ENCODE measurements at regions of chr22 and their contacts with region 1.

Region 1: DNA sequence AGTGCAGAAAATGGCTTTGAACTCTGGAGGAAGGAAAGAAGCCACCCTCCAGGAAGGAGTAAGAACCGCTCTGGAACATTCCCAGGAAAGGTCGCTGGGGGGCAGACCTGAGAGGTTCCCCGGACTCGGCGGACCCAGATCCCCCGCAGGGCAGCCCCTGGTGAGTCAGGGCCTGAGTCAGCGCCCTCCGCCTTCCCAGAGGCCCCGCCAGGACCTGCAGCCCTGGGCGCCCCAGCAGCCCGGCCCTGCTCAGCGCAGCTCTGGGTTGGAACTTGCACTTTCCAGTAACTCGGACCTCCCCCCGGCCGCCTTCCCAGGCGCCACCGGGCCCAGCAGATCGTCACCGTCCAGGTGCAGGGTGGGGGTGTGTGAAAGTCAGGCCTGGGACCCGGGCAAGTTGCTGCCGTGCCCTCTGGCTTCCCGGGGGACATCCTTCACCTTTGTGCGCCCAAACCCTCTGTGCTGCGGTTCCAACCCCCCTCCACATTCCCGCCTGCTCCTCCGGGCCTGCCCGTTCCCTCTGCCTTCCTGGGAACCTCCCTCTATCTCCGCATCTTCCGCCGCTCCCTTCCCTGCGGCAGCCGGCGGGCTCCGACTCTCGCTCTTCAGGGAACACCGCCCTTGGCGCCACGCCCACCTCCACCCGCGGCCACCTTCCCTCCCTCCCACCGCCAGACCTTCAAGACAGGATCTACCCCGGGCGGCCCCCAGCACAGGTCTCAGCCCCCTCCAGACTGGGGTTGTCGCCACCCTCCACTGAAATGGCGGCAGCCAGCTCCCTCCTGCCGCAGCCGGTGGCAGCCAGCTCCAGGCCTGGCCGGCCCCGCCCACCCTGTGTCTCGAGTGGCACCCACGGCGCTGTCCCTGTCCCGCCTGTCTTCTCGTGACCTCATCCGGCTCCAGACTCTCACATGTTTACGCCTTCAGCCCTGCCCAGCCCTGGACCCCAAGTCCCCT is 36.8 kb upstream of the WNT7B start:
- DNase-seq: peak; percentile 97
- H3K4me3 Mint-ChIP-seq: peak overlapping the region; percentile 72
- H3K27ac Mint-ChIP-seq: peak overlapping the region; percentile 86
- H3K4me1 Mint-ChIP-seq: peaks cover 13% of the 10 kb centered on the region
- H3K27me3 Mint-ChIP-seq: no peaks in the 10 kb centered on the region
- CTCF ChIP-seq: peak; percentile 65

Region 2: DNA sequence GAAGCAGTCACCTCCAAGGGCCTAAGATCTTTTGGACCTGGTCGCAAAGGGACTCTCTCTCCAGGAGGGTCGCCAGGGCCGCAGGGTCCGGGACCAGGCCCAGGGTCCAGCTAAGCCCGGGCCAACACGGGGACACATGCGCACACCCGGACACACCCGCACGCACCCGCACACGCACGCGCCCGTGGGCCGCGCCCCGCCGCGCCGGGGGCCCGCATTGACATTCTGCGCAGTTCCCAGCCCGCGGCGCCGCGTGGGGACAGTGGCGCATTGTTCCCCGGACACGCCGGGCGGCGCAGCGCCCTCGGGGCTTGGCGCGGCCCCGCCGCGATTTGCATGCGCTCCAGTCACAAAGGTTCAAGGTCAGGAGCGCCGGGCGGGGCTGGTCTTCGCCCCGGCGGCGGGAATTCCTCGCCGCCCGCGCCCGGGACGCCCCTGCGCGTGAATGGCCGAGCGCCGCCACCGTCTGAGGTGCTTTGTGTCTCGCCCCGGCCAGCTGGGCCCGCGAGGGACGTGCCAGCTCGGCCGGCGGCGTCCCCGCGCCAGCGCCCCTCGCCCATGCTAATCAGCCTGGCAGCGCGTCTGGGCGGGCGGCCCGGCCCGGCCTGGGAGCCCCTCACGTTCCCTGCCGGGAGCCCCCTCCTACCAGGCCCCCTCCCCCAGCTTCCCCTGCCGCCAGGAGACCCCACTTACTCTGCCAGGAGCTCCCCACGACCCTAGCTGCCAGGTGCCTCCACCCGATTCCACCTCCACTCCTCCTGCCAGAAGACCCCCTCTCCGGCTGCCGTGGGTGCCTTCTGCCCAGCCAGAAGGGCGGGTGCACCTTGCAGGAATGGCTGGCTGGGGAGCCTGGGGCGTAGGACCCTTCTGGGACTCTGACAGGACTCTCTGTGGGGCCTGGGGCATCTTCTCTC is 13.7 kb after region 1 on chr22:
- CTCF ChIA-PET with region 1: interaction called, 7 read pairs
- POLR2A ChIA-PET with region 1: interaction called, 61 read pairs
- intact Hi-C with region 1: no loop called
- DNase-seq: no peak
- H3K4me3 Mint-ChIP-seq: peak overlapping the region; percentile 55
- H3K27ac Mint-ChIP-seq: no peak overlapping the region
- H3K4me1 Mint-ChIP-seq: peaks cover 6% of the 10 kb centered on the region
- H3K27me3 Mint-ChIP-seq: peaks cover 32% of the 10 kb centered on the region
- CTCF ChIP-seq: no peak

Region 3: GRCh38 chr22:46044621-46045438 is 31.1 kb after region 1 on chr22:
- CTCF ChIA-PET with region 1: interaction called, 47 read pairs
- POLR2A ChIA-PET with region 1: interaction called, 47 read pairs
- intact Hi-C with region 1: no loop called
- DNase-seq: no peak
- H3K4me3 Mint-ChIP-seq: peak overlapping the region; percentile 79
- H3K27ac Mint-ChIP-seq: peak overlapping the region; percentile 97
- H3K4me1 Mint-ChIP-seq: peaks cover 14% of the 10 kb centered on the region
- H3K27me3 Mint-ChIP-seq: no peaks in the 10 kb centered on the region
- CTCF ChIP-seq: no peak

Region 4: DNA sequence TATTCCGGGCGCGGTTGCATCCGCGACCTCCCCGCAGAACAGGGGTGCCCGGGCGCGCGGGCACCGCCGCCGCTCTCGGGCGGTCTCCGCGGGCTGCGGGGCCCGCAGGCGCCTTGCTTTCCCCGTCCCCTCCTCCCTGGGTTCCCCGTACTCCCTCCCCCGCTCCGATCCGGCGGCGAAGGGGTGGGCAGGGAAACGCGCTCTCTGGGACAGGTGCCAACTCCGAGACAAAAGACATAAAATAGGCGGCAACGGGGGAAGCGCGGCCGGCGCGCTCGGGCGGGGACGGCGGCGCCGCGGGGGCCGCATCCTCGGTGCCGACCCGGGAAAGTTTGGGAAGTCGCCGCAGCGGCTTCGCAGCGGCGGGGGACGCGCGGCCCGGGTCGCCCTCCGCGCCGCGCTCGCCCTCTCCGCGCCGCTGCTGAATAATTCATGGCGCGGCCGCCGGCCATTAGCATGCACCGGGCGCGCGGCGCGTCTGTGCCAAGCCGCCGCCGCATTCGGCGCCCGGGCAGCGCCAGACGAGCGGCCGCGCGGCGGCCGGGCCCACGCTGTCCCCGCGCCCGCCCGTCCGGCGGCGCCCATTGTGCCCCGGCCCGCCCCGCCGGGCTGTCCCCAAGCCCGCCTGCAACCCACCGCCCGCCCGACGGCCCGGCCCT is 57.8 kb after region 1 on chr22:
- CTCF ChIA-PET with region 1: interaction called, 11 read pairs
- POLR2A ChIA-PET with region 1: interaction called, 533 read pairs
- intact Hi-C with region 1: no loop called
- DNase-seq: peak; percentile 96
- H3K4me3 Mint-ChIP-seq: peak overlapping the region; percentile 96
- H3K27ac Mint-ChIP-seq: peak overlapping the region; percentile 100
- H3K4me1 Mint-ChIP-seq: peaks cover 24% of the 10 kb centered on the region
- H3K27me3 Mint-ChIP-seq: no peaks in the 10 kb centered on the region
- CTCF ChIP-seq: no peak

Region 5: DNA sequence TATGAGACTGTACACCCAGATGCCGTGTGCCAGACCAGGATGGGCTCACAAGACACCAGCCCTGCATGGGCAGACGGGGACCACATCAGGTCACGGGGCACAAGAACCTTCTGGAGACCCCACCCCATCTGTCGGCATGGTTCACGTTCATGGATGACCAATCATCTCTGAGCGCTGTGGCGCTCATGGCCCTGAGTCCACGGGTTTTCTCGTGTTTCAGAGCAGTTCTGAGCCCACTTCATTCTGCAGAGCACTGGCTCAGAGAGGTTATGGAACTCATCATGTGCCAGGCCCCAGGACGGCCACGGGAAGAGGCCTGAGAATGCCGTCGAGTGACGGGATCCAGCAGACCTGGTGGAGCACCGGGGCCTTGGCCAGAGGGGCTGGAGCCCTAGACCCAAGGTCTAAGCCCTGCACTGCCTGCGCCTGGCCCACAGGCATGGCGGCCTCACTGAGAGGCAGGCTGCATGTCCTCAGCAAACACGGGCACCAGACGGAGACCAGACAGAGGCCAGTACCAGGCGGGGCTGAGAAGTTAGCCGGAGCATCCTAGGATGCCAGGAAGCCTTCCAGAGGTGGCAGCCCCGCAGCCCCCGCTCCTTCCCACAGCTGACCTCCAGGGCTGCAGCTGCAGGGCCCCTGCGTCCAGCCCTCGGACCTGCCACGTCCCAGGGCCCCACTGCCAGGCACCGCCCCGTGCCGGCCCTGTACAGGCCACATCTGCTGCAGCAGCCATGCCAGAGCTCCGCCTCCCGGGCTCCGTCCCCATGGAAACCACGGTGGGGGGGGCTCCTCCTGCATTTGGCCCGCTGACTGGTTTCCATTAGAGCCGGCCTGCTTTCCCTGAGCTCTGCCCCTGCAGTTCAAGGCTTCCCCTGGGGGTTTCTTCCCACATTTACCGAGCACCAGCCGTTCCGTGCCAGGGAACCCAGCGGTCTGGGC is 73.9 kb after region 1 on chr22:
- CTCF ChIA-PET with region 1: no interaction called
- POLR2A ChIA-PET with region 1: interaction called, 193 read pairs
- intact Hi-C with region 1: no loop called
- DNase-seq: peak; percentile 84
- H3K4me3 Mint-ChIP-seq: peak overlapping the region; percentile 96
- H3K27ac Mint-ChIP-seq: peak overlapping the region; percentile 100
- H3K4me1 Mint-ChIP-seq: peaks cover 40% of the 10 kb centered on the region
- H3K27me3 Mint-ChIP-seq: no peaks in the 10 kb centered on the region
- CTCF ChIP-seq: no peak

Measured in MCF 10A (cell line).